ENCODE measurements at regions of chr19 and their contacts with region 1.

Region 1: GRCh38 chr19:18328340-18329034 is 5.6 kb upstream of the LSM4 start:
- DNase-seq: peak; percentile 72 to 98 (median 94)
- H3K4me3 ChIP-seq: peak overlapping the region in 54 of 59 donors; percentile 0 to 60 (median 38)
- H3K27ac ChIP-seq: peak overlapping the region; percentile 2 to 96 (median 77)
- H3K27me3 ChIP-seq: no peaks in the 10 kb centered on the region
- CTCF ChIP-seq: peak; percentile 89 to 99 (median 95)

Region 2: DNA sequence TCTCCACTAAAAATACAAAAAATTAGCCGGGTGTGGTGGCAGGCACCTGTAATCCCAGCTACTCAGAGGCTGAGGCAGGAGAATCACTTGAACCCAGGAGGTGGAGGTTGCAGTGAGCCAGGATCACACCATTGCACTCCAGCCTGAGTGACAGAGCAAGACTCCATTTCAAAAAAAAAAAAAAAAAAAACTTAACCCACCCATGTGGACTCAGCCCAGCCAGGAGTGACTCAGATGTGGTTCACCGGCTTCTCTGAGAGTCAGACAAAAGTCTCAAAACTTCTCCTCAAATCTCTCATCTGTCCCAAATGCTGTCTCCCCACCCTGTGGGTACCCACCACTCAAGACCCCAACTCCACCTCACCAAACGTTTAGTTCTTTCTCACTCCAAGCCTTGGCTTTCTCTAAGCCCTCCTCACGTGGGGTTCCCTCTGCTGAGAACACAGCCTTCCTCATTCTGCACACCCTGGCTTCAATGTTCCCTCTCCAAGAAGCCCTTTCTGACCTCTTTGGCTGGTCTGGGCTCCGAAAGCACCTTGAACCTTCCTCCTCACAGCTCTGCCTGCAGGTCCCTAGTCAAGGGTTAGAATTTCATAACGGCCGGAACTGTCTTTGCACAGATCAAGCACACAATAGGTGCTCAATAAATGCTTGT is 113.6 kb before region 1 on chr19:
- intact Hi-C with region 1: loop called in 1 of 2 experiments (anchors 5 kb)
- DNase-seq: no peak
- H3K4me3 ChIP-seq: no peak overlapping the region
- H3K27ac ChIP-seq: no peak overlapping the region
- H3K27me3 ChIP-seq: no peaks in the 10 kb centered on the region
- CTCF ChIP-seq: no peak

Region 3: DNA sequence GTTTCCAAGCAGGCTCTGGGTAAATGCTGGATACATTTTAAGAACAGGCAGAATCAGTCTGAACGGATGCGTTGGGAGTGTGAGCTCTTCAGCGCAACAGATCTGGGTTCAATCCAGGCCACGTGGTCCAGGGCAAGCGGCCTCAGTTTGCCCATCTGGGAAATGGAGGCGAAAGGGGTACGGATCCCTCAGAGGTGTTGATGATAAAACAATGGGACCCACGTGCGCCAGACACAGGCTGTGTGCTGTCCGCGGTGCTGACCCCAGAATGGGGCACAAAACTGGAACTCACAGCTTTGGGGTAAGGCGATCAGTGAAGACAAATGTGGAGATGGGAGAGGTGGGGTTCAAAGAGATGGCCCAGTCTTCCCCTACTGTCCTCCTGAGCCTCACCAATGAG is 89.2 kb before region 1 on chr19:
- intact Hi-C with region 1: no loop called
- DNase-seq: no peak
- H3K4me3 ChIP-seq: no peak overlapping the region
- H3K27ac ChIP-seq: no peak overlapping the region
- H3K27me3 ChIP-seq: peaks cover 0 to 7% (median 0%) of the 10 kb centered on the region in 45 donors
- CTCF ChIP-seq: no peak

Measured in dorsolateral prefrontal cortex (tissue), 120 donors.